HEK293 (cell line): ENCODE measurements at regions of chr6 and their contacts with region 1.

Region 1: GRCh38 chr6:41306187-41306854 is 19.8 kb upstream of the TREM1 start:
- H3K4me3 ChIP-seq: no peak overlapping the region
- H3K27ac ChIP-seq: no peak overlapping the region
- H3K4me1 ChIP-seq: no peaks in the 10 kb centered on the region
- CTCF ChIP-seq: no peak

Region 2: GRCh38 chr6:41071923-41072675 is 234.2 kb before region 1 on chr6 and contains the start of gene OARD1:
- CTCF ChIA-PET with region 1: interaction called, 11 read pairs
- POLR2A ChIA-PET with region 1: no interaction called
- H3K4me3 ChIP-seq: peak within 1 kb of the TSS; percentile 95
- H3K27ac ChIP-seq: peak within 1 kb of the TSS; percentile 94
- H3K4me1 ChIP-seq: 0 out of 2 replicates have a peak, but pooled peaks cover 2% of the 10 kb centered on the region
- CTCF ChIP-seq: no peak

Region 3: DNA sequence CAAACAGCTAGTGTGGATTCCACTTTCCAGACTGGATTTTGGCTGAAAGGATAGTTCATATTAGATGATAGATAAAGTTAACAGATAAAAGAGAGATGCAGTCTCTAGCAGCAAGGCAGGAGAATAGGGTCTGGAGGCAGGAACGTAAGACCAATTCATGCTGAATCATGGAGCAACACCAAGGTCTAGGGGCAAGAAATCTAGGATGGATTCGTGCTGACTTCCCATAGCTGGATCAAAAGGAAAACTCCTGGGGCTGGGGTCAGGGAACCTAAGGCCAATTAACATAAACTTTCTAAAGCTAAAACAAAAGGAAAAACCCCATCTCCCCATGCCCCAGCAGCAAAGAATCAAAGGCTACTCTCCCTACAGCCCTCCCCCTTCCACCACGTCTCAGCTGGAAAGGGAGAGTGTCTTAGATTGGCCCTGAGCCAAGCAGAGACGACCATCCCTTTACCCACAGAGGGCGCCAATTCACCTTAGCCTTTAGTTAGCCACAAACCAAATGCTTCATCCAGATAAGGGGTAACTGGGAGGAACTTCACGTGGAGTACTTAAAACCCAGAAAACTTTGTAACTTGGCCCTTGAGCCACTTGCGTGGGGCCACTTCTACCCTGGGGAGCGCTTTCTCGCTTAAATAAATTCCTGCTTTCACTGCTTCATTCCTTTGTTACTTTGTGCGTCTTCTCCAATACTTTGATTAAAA is 27.5 kb before region 1 on chr6:
- CTCF ChIA-PET with region 1: interaction called, 14 read pairs
- POLR2A ChIA-PET with region 1: no interaction called
- H3K4me3 ChIP-seq: no peak overlapping the region
- H3K27ac ChIP-seq: no peak overlapping the region
- H3K4me1 ChIP-seq: no peaks in the 10 kb centered on the region
- CTCF ChIP-seq: peak; percentile 73

Region 4: GRCh38 chr6:41289815-41290214 is 16.5 kb before region 1 on chr6:
- CTCF ChIA-PET with region 1: interaction called, 11 read pairs
- POLR2A ChIA-PET with region 1: no interaction called
- H3K4me3 ChIP-seq: no peak overlapping the region
- H3K27ac ChIP-seq: no peak overlapping the region
- H3K4me1 ChIP-seq: no peaks in the 10 kb centered on the region; the same call in 1 of the 2 replicates
- CTCF ChIP-seq: no peak

Region 5: GRCh38 chr6:41334482-41335040 is 28.2 kb after region 1 on chr6:
- CTCF ChIA-PET with region 1: interaction called, 16 read pairs
- POLR2A ChIA-PET with region 1: no interaction called
- H3K4me3 ChIP-seq: no peak overlapping the region
- H3K27ac ChIP-seq: no peak overlapping the region
- H3K4me1 ChIP-seq: no peaks in the 10 kb centered on the region; the same call in 1 of the 2 replicates
- CTCF ChIP-seq: no peak; the same call in 1 of the 2 replicates